Activated CD4-positive, alpha-beta T cell treated with anti-CD3 and anti-CD28 coated beads, Interleukin-2, amount 10 ng/mL, durations not matched to agents 24 days and 14 days (primary cell): ENCODE measurements at regions of chr13 and their contacts with region 1.

Region 1: GRCh38 chr13:74287724-74288169 is 153.5 kb upstream of the KLF12 start:
- DNase-seq: peak; percentile 91
- H3K4me3 Mint-ChIP-seq: peak overlapping the region; percentile 71
- H3K27ac Mint-ChIP-seq: peak overlapping the region; percentile 82
- H3K4me1 Mint-ChIP-seq: peaks cover 41% of the 10 kb centered on the region
- H3K27me3 Mint-ChIP-seq: no peaks in the 10 kb centered on the region

Region 2: DNA sequence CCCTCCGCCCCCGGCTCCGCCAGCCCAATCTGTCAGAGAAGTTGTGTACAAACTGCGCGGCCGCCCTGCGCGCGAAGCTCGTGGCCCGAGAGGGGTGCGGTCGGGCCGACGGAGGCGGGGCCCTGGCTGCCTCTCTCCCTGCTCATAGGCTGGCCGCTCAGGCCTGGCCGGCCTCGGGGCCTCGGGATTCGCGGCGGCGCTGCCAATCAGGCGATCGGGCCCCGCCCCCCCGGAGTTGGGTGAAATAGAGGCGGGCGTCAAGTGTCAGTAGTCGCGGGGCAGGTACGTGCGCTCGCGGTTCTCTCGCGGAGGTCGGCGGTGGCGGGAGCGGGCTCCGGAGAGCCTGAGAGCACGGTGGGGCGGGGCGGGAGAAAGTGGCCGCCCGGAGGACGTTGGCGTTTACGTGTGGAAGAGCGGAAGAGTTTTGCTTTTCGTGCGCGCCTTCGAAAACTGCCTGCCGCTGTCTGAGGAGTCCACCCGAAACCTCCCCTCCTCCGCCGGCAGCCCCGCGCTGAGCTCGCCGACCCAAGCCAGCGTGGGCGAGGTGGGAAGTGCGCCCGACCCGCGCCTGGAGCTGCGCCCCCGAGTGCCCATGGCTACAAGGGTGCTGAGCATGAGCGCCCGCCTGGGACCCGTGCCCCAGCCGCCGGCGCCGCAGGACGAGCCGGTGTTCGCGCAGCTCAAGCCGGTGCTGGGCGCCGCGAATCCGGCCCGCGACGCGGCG is 1228.8 kb before region 1 on chr13 and contains the start of gene KLF5:
- intact Hi-C with region 1: loop called (anchors 5 kb)
- DNase-seq: peak; percentile 99
- H3K4me3 Mint-ChIP-seq: peak within 1 kb of the TSS; percentile 86
- H3K27ac Mint-ChIP-seq: peak within 1 kb of the TSS; percentile 83
- H3K4me1 Mint-ChIP-seq: peaks cover 20% of the 10 kb centered on the region
- H3K27me3 Mint-ChIP-seq: peaks cover 49% of the 10 kb centered on the region
- total RNA-seq, gene KLF5: 2.0 and 2.8 TPM in 2 replicates

Region 3: DNA sequence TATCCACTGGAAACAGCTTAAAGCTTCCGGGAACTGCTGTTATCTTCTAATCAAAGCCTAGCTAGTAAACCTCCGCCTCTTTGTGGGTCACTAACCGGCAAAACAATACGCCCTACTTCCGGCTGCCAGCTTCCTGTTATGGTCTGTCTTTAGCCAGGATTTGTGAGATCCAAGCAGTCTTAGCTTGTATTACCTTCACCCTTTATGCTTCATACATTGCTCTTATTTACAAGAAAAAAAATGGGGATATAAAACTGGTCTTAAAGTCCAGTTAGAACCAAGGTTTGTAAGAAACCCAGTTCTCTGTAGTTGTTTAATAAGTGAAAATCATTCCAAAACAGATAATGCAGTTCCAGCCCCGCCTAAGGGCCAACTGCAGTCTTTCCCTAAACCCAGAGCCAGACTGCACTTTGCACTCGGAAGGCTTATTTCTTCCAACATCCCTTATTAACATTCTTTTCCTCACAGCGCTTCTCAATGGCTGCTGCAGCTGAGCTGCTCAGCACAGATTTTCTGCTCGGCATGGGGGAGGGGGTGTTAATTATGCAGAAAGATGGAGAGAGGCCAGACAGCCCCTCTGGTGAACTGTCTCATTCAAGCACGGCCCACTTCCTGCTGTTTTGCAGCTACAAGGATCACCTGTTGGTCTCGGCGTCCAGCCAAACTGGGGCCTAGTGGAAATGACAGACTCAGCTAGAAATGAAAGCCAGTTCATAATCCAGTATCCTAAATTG is 521.9 kb before region 1 on chr13:
- intact Hi-C with region 1: loop called (anchors 2 kb)
- DNase-seq: peak; percentile 88
- H3K4me3 Mint-ChIP-seq: peak overlapping the region; percentile 78
- H3K27ac Mint-ChIP-seq: peak overlapping the region; percentile 88
- H3K4me1 Mint-ChIP-seq: peaks cover 44% of the 10 kb centered on the region
- H3K27me3 Mint-ChIP-seq: no peaks in the 10 kb centered on the region

Region 4: GRCh38 chr13:73943137-73943964 is 344.4 kb before region 1 on chr13:
- intact Hi-C with region 1: loop called (anchors 1 kb)
- DNase-seq: no peak
- H3K4me3 Mint-ChIP-seq: peak overlapping the region; percentile 24
- H3K27ac Mint-ChIP-seq: peak overlapping the region; percentile 69
- H3K4me1 Mint-ChIP-seq: peaks cover 25% of the 10 kb centered on the region
- H3K27me3 Mint-ChIP-seq: no peaks in the 10 kb centered on the region

Region 5: GRCh38 chr13:74062933-74063332 is 224.8 kb before region 1 on chr13:
- intact Hi-C with region 1: loop called (anchors 5 kb)
- DNase-seq: peak; percentile 67
- H3K4me3 Mint-ChIP-seq: peak overlapping the region; percentile 74
- H3K27ac Mint-ChIP-seq: peak overlapping the region; percentile 88
- H3K4me1 Mint-ChIP-seq: peaks cover 62% of the 10 kb centered on the region
- H3K27me3 Mint-ChIP-seq: no peaks in the 10 kb centered on the region

Region 6: DNA sequence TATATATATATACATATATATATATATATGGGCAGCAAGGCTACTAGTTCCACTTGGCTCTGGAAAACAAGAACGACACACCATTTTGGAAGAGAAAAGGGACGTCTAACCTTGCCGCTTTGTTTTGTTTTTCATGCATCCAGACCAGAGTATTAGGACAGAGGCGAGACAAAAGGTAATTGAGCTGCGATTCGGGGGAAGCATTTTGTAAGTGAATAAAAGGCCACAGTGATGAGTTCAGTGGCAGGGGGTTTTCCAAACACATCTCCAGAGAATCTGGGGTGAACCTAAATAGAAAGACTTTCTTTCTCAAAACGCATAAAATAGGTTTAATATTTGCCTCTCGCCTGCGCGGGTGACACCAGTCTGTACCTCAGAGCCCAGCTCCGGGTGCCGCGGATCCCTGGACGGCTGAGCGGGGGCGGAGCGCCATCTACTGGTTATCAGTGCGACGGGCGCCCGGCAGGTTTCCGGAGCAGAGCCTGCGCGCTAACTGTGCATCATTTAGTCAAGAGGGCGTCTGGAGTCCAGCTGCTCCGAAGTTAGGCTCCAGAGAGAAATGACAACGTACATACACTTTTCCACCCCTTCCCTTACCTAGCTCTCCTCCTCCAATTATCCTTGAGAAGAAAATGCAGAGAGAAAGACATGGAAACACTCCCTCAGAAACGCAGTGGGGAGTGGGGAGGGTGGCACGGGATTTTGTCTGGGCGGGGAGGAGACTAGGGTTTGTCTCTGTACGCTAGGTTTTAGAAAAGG is 931.9 kb after region 1 on chr13:
- intact Hi-C with region 1: loop called (anchors 5 kb)
- DNase-seq: peak; percentile 95
- H3K4me3 Mint-ChIP-seq: peak overlapping the region; percentile 66
- H3K27ac Mint-ChIP-seq: no peak overlapping the region
- H3K4me1 Mint-ChIP-seq: peaks cover 6% of the 10 kb centered on the region
- H3K27me3 Mint-ChIP-seq: peaks cover 42% of the 10 kb centered on the region